ENCODE measurements at regions of chr7 and their contacts with region 1.

Region 1: GRCh38 chr7:8056431-8056830 is 87.8 kb downstream of the GLCCI1 start:
- DNase-seq: no peak
- ATAC-seq: no peak
- H3K4me3 ChIP-seq: no peak overlapping the region
- H3K27ac ChIP-seq: no peak overlapping the region
- H3K4me1 ChIP-seq: no peaks in the 10 kb centered on the region
- H3K27me3 ChIP-seq: no peaks in the 10 kb centered on the region
- CTCF ChIP-seq: no peak
- POLR2A ChIP-seq: no peak

Region 2: DNA sequence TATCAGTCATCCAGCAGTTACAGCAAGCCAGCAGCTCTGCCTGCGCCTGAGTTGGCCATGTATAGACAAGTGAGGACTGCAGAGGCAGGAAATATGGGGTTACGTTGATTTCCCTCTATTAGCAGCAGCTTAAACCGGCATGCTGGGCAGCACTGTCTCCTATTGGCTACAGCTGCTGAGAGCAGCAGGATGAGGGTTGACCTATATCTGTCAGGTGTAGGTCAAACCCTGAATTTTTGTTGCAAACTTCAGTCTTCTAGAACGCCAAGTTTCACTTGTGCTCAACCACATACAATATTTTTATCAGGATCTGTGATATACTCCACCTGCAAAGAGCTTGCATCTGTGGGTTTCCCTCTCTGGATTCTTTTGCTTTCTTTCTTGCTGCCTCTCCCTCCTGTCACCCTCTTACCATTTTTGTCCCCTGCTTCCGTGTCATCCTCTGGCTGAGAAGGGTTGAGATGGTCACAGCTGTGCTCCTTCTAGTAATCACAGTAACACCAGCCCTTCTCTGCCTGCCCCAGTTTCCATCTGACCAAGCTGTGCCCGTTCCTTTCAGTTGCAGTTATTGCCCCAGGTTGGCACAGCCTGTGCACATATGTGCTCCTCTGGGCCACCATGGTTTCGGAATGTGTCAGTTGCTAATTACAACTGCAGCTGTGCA is 111.7 kb before region 1 on chr7:
- intact Hi-C with region 1: loop called in 1 of 10 experiments (anchors 5 kb)
- DNase-seq: no peak
- ATAC-seq: peak in 1 of 4 donors; percentile 26
- H3K4me3 ChIP-seq: no peak overlapping the region
- H3K27ac ChIP-seq: peak overlapping the region in 1 of 12 donors; percentile 5
- H3K4me1 ChIP-seq: peaks cover 0 to 3% (median 0%) of the 10 kb centered on the region in 12 donors
- H3K27me3 ChIP-seq: no peaks in the 10 kb centered on the region
- CTCF ChIP-seq: no peak
- POLR2A ChIP-seq: no peak

Region 3: GRCh38 chr7:8785077-8785476 is 728.6 kb after region 1 on chr7:
- intact Hi-C with region 1: no loop called
- DNase-seq: no peak
- ATAC-seq: no peak
- H3K4me3 ChIP-seq: no peak overlapping the region
- H3K27ac ChIP-seq: no peak overlapping the region
- H3K4me1 ChIP-seq: no peaks in the 10 kb centered on the region
- H3K27me3 ChIP-seq: no peaks in the 10 kb centered on the region
- CTCF ChIP-seq: no peak
- POLR2A ChIP-seq: no peak